ENCODE measurements at regions of chr10 and their contacts with region 1.

Region 1: GRCh38 chr10:35195361-35196306 is 69.0 kb downstream of the CREM start:
- DNase-seq: peak; percentile 82
- H3K4me3 ChIP-seq: peak overlapping the region; percentile 45
- H3K27me3 ChIP-seq: no peaks in the 10 kb centered on the region
- CTCF ChIP-seq: peak; percentile 88

Region 2: GRCh38 chr10:35119378-35119777 is 76.3 kb before region 1 on chr10:
- CTCF ChIA-PET with region 1: interaction called, 24 read pairs
- POLR2A ChIA-PET with region 1: no interaction called
- DNase-seq: no peak
- H3K4me3 ChIP-seq: no peak overlapping the region
- H3K27me3 ChIP-seq: no peaks in the 10 kb centered on the region
- CTCF ChIP-seq: no peak

Region 3: GRCh38 chr10:35178331-35178730 is 17.3 kb before region 1 on chr10:
- CTCF ChIA-PET with region 1: interaction called, 14 read pairs
- POLR2A ChIA-PET with region 1: no interaction called
- DNase-seq: no peak
- H3K4me3 ChIP-seq: no peak overlapping the region
- H3K27me3 ChIP-seq: no peaks in the 10 kb centered on the region
- CTCF ChIP-seq: no peak

Region 4: GRCh38 chr10:35208536-35208935 is 12.9 kb after region 1 on chr10:
- CTCF ChIA-PET with region 1: interaction called, 24 read pairs
- POLR2A ChIA-PET with region 1: no interaction called
- DNase-seq: no peak
- H3K4me3 ChIP-seq: no peak overlapping the region
- H3K27me3 ChIP-seq: no peaks in the 10 kb centered on the region
- CTCF ChIP-seq: no peak

Region 5: DNA sequence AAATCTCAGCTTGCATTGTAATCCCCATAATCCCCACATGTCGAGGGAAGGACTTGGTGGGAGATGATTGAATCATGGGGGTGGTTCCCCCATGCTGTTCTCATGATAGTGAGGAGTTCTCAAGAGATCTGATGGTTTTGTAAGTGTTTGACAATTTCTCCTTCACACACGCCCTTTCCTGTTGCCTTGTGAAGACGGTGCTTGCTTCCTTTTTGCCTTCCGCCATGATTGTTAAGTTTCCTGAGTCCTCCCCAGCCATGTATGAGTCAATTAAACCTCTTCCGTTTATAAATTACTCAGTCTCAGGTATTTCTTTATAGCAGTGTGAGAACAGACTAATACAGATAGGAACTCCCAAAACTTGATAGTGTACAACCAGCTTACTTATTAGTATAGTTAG is 29.6 kb after region 1 on chr10:
- CTCF ChIA-PET with region 1: interaction called, 10 read pairs
- POLR2A ChIA-PET with region 1: no interaction called
- DNase-seq: no peak
- H3K4me3 ChIP-seq: no peak overlapping the region
- H3K27me3 ChIP-seq: no peaks in the 10 kb centered on the region; the same call in 1 of the 2 replicates
- CTCF ChIP-seq: no peak

Measured in BJ (cell line).